ENCODE measurements at regions of chr5 and their contacts with region 1.

Region 1: GRCh38 chr5:36875790-36876388 is 680 bp upstream of the NIPBL start:
- DNase-seq: peak; percentile 46
- ATAC-seq: peak; percentile 71
- H3K4me3 ChIP-seq: peak overlapping the region; percentile 95
- H3K27ac ChIP-seq: peak overlapping the region; percentile 85
- H3K4me1 ChIP-seq: peaks cover 7% of the 10 kb centered on the region; the same call in 1 of the 2 replicates
- H3K27me3 ChIP-seq: no peaks in the 10 kb centered on the region
- CTCF ChIP-seq: peak; percentile 49 to 65 (median 61)
- EP300 ChIP-seq: no peak
- POLR2A ChIP-seq: no peak
- RAD21 ChIP-seq: peak; percentile 52

Region 2: GRCh38 chr5:36151434-36152323 is 724.2 kb before region 1 on chr5 and contains the starts of genes LMBRD2 and SKP2:
- CTCF ChIA-PET with region 1: no interaction called
- POLR2A ChIA-PET with region 1: no interaction called
- RAD21 ChIA-PET with region 1: no interaction called
- SMC1A ChIA-PET with region 1: no interaction called
- in situ Hi-C with region 1: no loop called
- intact Hi-C with region 1: loop called (anchors 10 kb)
- DNase-seq: peak; percentile 95
- ATAC-seq: peak; percentile 97
- H3K4me3 ChIP-seq: peak within 1 kb of the TSS; percentile 94
- H3K27ac ChIP-seq: peak within 1 kb of the TSS; percentile 82
- H3K4me1 ChIP-seq: no peaks in the 10 kb centered on the region
- H3K27me3 ChIP-seq: no peaks in the 10 kb centered on the region
- CTCF ChIP-seq: no peak
- EP300 ChIP-seq: no peak
- POLR2A ChIP-seq: peak; percentile 82
- RAD21 ChIP-seq: no peak
- polyA plus RNA-seq, gene LMBRD2: 0.90 to 1.8 TPM
- polyA plus RNA-seq, gene SKP2: 13.9 to 17.9 TPM

Region 3: DNA sequence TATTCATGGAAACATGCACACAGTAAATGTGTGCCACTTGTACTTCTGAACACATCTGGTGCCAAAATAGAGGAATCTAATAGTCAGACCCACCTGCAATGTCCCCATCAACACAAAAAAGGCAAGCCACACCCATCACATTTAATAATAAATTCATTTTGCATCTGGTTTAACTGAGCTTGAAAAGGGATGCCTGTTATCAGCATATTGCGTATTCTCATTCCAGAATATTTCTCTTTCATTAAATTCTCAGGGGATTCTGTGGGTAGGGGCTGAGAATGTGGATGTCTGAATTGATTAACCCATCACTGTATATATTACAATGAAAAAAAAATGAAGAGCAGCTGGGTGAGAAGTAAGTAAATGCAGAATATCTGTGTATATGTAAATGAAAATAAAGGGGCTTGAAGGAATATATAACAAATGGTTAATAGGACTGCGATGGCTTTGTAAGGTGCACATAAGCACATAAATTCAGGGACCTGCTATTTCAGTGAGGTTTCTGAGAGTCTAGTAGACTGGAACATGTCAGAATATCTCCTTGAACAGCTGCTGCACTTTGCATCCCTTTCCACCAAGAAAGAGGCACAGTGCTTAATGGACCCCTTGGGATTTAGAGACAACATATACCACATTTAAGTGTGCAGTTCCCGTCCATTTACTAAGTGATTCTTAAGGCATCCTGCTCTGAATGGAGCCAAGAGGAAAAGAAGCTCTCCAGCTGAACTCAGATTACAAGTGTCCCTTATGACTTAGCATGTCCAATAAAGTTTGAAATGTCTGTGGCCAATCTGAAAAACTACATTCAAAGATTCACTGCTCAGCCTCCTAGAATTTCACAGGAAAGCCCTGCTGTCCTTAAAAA is 103.4 kb before region 1 on chr5:
- CTCF ChIA-PET with region 1: no interaction called
- POLR2A ChIA-PET with region 1: no interaction called
- RAD21 ChIA-PET with region 1: no interaction called
- SMC1A ChIA-PET with region 1: no interaction called
- in situ Hi-C with region 1: no loop called
- intact Hi-C with region 1: no loop called
- DNase-seq: no peak
- ATAC-seq: no peak
- H3K4me3 ChIP-seq: no peak overlapping the region
- H3K27ac ChIP-seq: no peak overlapping the region
- H3K4me1 ChIP-seq: no peaks in the 10 kb centered on the region
- H3K27me3 ChIP-seq: no peaks in the 10 kb centered on the region
- CTCF ChIP-seq: no peak
- EP300 ChIP-seq: no peak
- POLR2A ChIP-seq: no peak
- RAD21 ChIP-seq: no peak

Region 4: DNA sequence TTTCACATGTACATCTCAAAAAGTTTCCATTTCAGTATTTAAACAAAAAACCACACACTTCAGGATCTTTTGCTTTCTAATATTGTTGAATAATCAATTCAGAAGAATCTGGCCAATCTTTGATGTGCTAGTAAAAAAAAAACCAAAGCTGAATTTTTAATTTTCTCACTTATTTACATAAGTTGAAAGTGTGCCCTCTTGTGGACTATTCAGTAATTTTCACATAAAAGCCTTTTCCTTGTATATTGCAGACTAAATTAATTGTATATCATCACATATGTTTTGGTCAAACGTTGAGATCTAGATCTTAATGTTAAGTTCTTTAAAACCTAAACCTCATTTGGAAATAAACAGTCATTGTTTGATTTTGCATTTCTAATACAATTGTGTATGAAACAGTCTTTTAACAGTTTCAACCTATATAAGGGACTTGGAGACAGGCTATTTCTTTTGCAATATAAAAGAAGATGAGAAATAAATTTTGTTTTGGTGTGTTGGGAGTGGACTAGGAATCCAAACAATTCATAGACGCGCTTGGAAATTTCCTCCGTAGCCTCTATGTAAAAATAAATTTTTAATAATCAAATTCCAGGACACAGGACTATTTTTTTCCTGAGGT is 68.8 kb after region 1 on chr5:
- CTCF ChIA-PET with region 1: interaction called, 30 read pairs
- POLR2A ChIA-PET with region 1: no interaction called
- RAD21 ChIA-PET with region 1: interaction called, 35 read pairs
- SMC1A ChIA-PET with region 1: interaction called, 15 read pairs
- in situ Hi-C with region 1: no loop called
- intact Hi-C with region 1: loop called (anchors 1 kb)
- DNase-seq: no peak
- ATAC-seq: peak; percentile 38
- H3K4me3 ChIP-seq: no peak overlapping the region
- H3K27ac ChIP-seq: no peak overlapping the region
- H3K4me1 ChIP-seq: no peaks in the 10 kb centered on the region
- H3K27me3 ChIP-seq: no peaks in the 10 kb centered on the region
- CTCF ChIP-seq: peak in 2 of 3 experiments; percentile 44 to 47; a peak in 3 of 6 replicates
- EP300 ChIP-seq: no peak
- POLR2A ChIP-seq: no peak
- RAD21 ChIP-seq: peak; percentile 38; the same call in 1 of the 2 replicates

Region 5: DNA sequence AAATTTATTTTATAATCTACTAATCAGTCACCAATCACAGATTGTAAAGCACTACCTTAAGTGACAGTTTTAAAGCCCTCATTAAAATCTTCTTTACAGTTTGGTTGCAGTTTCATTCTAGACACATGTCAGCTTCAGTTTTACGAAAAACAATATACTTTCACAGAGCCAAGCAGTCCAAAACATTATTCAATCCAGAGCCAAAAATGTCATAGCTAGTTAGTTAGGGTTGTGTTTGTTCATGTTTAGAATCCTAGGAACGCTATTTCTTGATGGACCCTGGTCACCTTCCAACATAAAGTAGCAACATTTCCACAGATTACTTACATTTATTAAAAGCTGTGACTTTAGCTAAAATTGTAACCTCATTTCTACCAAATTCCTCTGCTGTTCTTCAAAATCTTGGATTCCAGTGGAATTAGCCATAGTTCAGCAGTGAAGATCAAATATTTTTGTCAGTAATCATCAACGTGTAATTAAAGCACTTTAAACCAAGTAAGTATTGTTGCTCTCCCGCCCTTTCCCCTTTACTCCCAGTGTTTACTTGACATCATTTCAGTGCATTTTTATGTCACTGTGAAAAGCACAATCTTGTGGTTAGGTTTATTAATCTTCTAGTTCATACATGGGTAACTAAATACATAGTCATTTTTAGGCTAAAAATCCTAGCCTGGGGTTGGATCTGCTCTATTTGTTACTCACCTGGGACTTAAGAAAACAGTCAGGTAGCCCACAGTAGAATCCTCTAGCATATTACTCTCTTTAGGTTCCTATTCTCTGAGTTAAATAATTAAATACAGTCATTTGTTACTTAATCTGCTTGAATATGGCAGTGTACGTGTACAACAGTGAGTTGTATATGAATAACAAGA is 74.9 kb after region 1 on chr5:
- CTCF ChIA-PET with region 1: interaction called, 30 read pairs
- POLR2A ChIA-PET with region 1: interaction called, 4 read pairs
- RAD21 ChIA-PET with region 1: interaction called, 35 read pairs
- SMC1A ChIA-PET with region 1: interaction called, 15 read pairs
- in situ Hi-C with region 1: no loop called
- intact Hi-C with region 1: no loop called
- DNase-seq: no peak
- ATAC-seq: peak; percentile 76
- H3K4me3 ChIP-seq: no peak overlapping the region
- H3K27ac ChIP-seq: no peak overlapping the region
- H3K4me1 ChIP-seq: no peaks in the 10 kb centered on the region
- H3K27me3 ChIP-seq: no peaks in the 10 kb centered on the region
- CTCF ChIP-seq: no peak
- EP300 ChIP-seq: no peak
- POLR2A ChIP-seq: no peak
- RAD21 ChIP-seq: no peak

Region 6: GRCh38 chr5:37005946-37006540 is 130.2 kb after region 1 on chr5:
- CTCF ChIA-PET with region 1: interaction called, 12 read pairs
- POLR2A ChIA-PET with region 1: no interaction called
- RAD21 ChIA-PET with region 1: no interaction called
- SMC1A ChIA-PET with region 1: no interaction called
- in situ Hi-C with region 1: no loop called
- intact Hi-C with region 1: loop called (anchors 5 kb)
- DNase-seq: no peak
- ATAC-seq: peak; percentile 66
- H3K4me3 ChIP-seq: no peak overlapping the region
- H3K27ac ChIP-seq: no peak overlapping the region
- H3K4me1 ChIP-seq: no peaks in the 10 kb centered on the region
- H3K27me3 ChIP-seq: no peaks in the 10 kb centered on the region
- CTCF ChIP-seq: peak; percentile 42 to 57 (median 56); a peak in 4 of 6 replicates
- EP300 ChIP-seq: no peak
- POLR2A ChIP-seq: no peak
- RAD21 ChIP-seq: peak; percentile 52; the same call in 1 of the 2 replicates

Region 7: DNA sequence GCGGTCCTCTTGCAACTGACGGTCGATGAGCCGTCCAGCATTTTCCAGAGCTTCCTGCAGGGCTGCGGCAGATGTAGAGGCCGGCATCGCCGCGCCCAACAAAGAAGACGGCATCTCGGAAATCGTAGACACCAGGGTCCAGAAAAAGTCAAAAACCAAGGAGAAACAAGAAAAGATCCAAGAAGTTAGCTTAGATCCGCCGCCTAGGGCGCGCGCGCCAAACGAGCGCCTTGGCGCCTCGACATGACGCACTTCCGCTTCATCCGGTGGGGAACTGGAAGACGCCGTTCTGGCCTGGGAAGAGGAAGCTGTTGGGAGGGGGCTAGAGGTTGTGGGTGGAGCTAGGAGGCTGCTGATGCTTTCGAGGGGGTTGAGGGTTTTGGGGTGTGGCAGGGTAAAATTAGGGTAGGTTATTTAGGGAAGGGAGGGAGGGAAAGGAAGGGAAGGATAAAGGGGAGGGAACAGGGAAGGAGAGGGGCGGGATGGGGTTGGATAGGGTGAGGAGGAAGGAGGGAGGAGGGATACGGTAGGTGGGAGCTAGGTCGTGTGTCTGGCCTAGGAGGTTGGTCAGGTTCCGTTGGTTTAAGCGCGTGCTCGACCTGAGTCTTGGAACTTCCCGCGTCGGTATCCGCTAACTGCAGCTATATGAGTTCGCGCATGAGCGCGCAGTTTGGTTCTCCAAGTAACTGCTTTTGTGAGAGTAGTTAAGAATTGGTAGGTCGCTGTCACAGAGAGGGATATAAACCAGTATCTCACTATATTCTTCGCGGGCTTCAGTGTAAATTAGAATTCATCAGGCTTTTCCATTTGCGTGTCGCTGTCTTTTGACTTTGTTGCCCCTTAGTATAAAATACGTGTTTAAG is 495.2 kb after region 1 on chr5 and contains the start of gene NUP155:
- CTCF ChIA-PET with region 1: interaction called, 3 read pairs
- POLR2A ChIA-PET with region 1: no interaction called
- RAD21 ChIA-PET with region 1: no interaction called
- SMC1A ChIA-PET with region 1: no interaction called
- in situ Hi-C with region 1: no loop called
- intact Hi-C with region 1: loop called (anchors 10 kb)
- DNase-seq: peak; percentile 87
- ATAC-seq: peak; percentile 93
- H3K4me3 ChIP-seq: peak within 1 kb of the TSS; percentile 92
- H3K27ac ChIP-seq: peak within 1 kb of the TSS; percentile 85
- H3K4me1 ChIP-seq: peaks cover 8% of the 10 kb centered on the region
- H3K27me3 ChIP-seq: no peaks in the 10 kb centered on the region
- CTCF ChIP-seq: no peak
- EP300 ChIP-seq: peak in 1 of 2 experiments; percentile 53; a peak in 1 of 4 replicates
- POLR2A ChIP-seq: peak; percentile 92
- RAD21 ChIP-seq: no peak
- polyA plus RNA-seq, gene NUP155: 15.9 to 24.9 TPM